CD4-positive, alpha-beta memory T cell (primary cell): ENCODE measurements at regions of chr22 and their contacts with region 1.

Region 1: DNA sequence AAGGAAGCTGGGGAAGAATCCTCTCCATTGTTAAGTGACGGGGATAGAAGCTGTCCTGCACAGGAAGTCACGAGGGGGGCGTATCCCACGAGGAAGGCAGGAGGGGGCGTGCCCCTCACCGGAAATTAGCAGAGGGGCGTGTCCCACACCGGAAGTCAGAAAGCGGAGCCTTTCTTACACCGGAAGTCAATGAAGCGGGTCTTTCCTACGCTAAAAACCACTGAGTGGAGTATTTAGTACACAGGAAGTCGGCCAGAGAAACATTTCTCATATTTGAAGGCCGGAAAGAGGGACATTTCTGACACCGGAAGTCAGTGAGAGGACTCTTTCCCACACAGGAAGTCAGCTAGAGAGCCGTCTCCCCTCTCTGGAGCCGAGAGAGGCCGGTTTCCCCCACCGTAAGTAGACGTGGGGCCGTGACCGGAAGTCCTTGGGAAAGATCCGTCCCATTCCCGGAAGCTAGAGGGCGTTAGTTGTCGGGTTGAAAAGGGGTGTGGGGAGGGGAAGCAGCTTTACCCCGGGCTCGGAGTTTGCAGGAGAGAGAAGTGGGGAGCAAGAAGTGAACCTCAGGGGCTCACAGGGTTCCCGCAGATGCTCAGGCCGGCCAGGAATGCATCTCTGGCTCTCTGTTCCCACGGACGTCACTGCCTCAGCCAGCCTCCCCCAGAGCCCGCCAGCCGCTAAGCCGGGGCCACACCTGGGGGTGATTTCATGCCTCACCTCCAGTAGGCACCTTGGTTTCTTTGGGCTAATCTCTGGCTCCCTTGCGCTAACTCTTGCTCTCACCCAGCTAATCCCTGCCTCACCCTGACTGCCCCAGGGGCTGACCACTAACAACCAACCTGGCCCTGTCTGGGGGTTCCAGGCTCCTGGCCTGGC is 15.4 kb downstream of the MIAT start:
- DNase-seq: peak; percentile 91 to 94 (median 92)
- H3K4me3 ChIP-seq: peak overlapping the region; percentile 79
- H3K4me3 Mint-ChIP-seq: peak overlapping the region; percentile 85 to 99 (median 98)
- H3K27ac ChIP-seq: peak overlapping the region; percentile 94
- H3K27ac Mint-ChIP-seq: peak overlapping the region; percentile 95 to 99 (median 98)
- H3K4me1 ChIP-seq: peaks cover 81% of the 10 kb centered on the region
- H3K4me1 Mint-ChIP-seq: peaks cover 61 to 92% (median 75%) of the 10 kb centered on the region in 4 donors
- H3K27me3 ChIP-seq: no peaks in the 10 kb centered on the region
- H3K27me3 Mint-ChIP-seq: no peaks in the 10 kb centered on the region

Region 2: DNA sequence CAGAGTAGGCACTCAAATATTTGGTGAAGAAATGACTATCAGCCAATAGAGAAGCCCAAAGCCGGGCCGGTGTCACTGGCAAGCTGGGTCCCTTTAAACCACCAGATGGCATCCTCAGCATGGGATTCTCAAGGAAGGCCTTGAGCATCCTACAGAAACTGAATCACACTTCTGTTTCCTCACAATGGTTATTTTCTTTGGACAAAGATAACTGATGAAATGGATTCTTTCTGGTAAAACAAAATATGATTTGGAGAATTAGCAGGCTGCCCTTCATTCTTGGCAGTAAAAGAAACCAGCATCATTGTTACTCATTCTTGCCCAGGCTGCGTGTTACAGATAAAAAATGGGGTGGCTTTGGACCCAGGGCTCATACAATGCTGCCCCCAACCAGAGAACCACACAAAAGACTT is 274.1 kb before region 1 on chr22:
- CTCF ChIA-PET with region 1: no interaction called
- POLR2A ChIA-PET with region 1: no interaction called
- intact Hi-C with region 1: loop called (anchors 2 kb)
- DNase-seq: peak; percentile 36 to 56 (median 46)
- H3K4me3 ChIP-seq: no peak overlapping the region
- H3K4me3 Mint-ChIP-seq: no peak overlapping the region
- H3K27ac ChIP-seq: no peak overlapping the region
- H3K27ac Mint-ChIP-seq: no peak overlapping the region
- H3K4me1 ChIP-seq: no peaks in the 10 kb centered on the region
- H3K4me1 Mint-ChIP-seq: no peaks in the 10 kb centered on the region
- H3K27me3 ChIP-seq: no peaks in the 10 kb centered on the region
- H3K27me3 Mint-ChIP-seq: peaks cover 5 to 6% of the 10 kb centered on the region in 2 donors

Region 3: GRCh38 chr22:26483439-26484359 is 189.1 kb before region 1 on chr22 and contains the starts of genes HPS4 and SRRD:
- CTCF ChIA-PET with region 1: interaction called, 3 read pairs
- POLR2A ChIA-PET with region 1: interaction called, 65 read pairs
- intact Hi-C with region 1: loop called (anchors 1 kb)
- DNase-seq: peak; percentile 91 to 96 (median 94)
- H3K4me3 ChIP-seq: peak within 1 kb of the TSS; percentile 51 to 92
- H3K4me3 Mint-ChIP-seq: peak within 1 kb of the TSS; percentile 91 to 98 (median 92)
- H3K27ac ChIP-seq: peak within 1 kb of the TSS; percentile 95
- H3K27ac Mint-ChIP-seq: peak within 1 kb of the TSS; percentile 93 to 99 (median 99)
- H3K4me1 ChIP-seq: peaks cover 70% of the 10 kb centered on the region
- H3K4me1 Mint-ChIP-seq: peaks cover 50 to 79% (median 66%) of the 10 kb centered on the region in 4 donors
- H3K27me3 ChIP-seq: no peaks in the 10 kb centered on the region
- H3K27me3 Mint-ChIP-seq: no peaks in the 10 kb centered on the region
- total RNA-seq, gene HPS4: 54.0 to 59.7 TPM
- total RNA-seq, gene SRRD: 19.5 to 20.7 TPM

Region 4: DNA sequence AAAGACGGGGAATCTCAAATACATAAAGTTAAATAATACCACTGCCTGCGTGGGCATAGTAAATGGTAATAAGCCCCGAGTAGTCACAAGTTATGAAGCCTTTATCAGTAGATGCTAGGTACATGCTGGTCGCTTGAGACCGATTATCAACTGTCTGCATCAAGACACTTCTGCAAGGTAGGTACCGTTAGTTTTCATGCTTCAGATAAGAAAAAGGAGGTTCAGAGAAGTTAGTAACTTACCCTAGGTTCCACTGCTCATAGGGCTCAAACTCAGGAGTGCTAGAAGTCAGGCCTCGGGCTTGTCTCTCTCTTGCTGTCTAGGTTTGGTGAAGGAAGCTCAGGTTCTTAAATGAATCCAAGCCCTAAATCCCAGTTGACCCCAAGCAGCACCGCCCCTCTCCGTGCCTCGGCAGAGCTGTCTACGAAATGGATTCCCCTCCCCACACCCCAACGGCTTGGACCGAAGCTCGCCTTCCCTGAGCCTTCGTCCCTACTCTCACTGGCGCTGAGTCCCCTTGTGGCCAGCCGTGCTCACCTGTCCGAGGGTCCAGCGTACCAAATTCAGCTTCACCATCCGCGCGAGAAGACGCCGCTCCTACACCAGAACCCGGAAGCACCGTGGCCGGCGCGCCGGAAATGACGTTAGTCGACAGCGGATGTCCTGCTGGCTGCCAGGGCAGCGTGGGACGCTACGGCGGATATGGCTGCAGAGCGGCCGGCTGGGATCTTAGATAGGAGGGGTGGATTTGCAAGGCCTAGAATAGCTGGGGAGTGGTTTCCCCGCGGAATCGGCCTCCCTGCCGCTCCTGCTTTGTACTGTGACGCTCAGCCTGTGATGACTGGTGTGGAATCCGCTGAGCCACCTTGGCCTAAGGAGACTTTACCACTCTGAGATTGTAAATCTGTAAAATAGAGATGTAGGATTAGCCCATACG is 160.7 kb before region 1 on chr22 and contains the start of gene TFIP11:
- CTCF ChIA-PET with region 1: no interaction called
- POLR2A ChIA-PET with region 1: interaction called, 5 read pairs
- intact Hi-C with region 1: loop called (anchors 1 kb)
- DNase-seq: peak; percentile 83 to 90 (median 84)
- H3K4me3 ChIP-seq: peak within 1 kb of the TSS; percentile 83 to 90
- H3K4me3 Mint-ChIP-seq: peak within 1 kb of the TSS; percentile 99 to 100 (median 99)
- H3K27ac ChIP-seq: peak within 1 kb of the TSS; percentile 94
- H3K27ac Mint-ChIP-seq: peak within 1 kb of the TSS; percentile 95 to 100 (median 100)
- H3K4me1 ChIP-seq: peaks cover 21% of the 10 kb centered on the region
- H3K4me1 Mint-ChIP-seq: peaks cover 26 to 46% (median 40%) of the 10 kb centered on the region in 4 donors
- H3K27me3 ChIP-seq: no peaks in the 10 kb centered on the region
- H3K27me3 Mint-ChIP-seq: no peaks in the 10 kb centered on the region
- total RNA-seq, gene TFIP11: 72.7 to 74.5 TPM

Region 5: GRCh38 chr22:26642465-26643417 is 30.1 kb before region 1 on chr22:
- CTCF ChIA-PET with region 1: no interaction called
- POLR2A ChIA-PET with region 1: interaction called, 42 read pairs
- intact Hi-C with region 1: no loop called
- DNase-seq: peak; percentile 45 to 74 (median 51)
- H3K4me3 ChIP-seq: peak overlapping the region; percentile 2 to 17
- H3K4me3 Mint-ChIP-seq: peak overlapping the region; percentile 55 to 79 (median 70)
- H3K27ac ChIP-seq: peak overlapping the region; percentile 61
- H3K27ac Mint-ChIP-seq: peak overlapping the region; percentile 90 to 97 (median 96)
- H3K4me1 ChIP-seq: peaks cover 71% of the 10 kb centered on the region
- H3K4me1 Mint-ChIP-seq: peaks cover 53 to 73% (median 64%) of the 10 kb centered on the region in 4 donors
- H3K27me3 ChIP-seq: no peaks in the 10 kb centered on the region
- H3K27me3 Mint-ChIP-seq: no peaks in the 10 kb centered on the region

Region 6: DNA sequence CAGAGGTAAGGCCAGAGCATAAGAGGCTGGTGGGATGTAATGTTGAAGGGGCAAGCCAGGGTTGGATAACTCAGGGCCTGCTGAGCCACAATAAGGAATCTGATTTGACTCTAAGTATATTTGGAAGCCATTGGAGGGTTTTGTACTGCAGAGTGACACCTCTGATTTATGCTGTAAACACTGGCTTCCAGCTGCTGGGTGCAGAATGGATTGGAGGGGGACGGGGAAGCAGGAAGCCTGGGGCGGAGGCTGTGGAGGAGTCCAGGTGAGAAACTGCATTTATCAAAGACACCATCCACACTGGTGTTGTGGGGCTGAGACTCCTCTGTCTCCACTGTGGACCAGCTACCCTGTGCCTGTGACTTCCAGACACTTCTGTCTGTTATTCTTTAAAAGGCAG is 11.3 kb after region 1 on chr22:
- CTCF ChIA-PET with region 1: no interaction called
- POLR2A ChIA-PET with region 1: interaction called, 27 read pairs
- intact Hi-C with region 1: no loop called
- DNase-seq: no peak
- H3K4me3 ChIP-seq: no peak overlapping the region
- H3K4me3 Mint-ChIP-seq: no peak overlapping the region
- H3K27ac ChIP-seq: no peak overlapping the region
- H3K27ac Mint-ChIP-seq: peak overlapping the region in 5 of 7 donors; percentile 35 to 67 (median 44)
- H3K4me1 ChIP-seq: peaks cover 17% of the 10 kb centered on the region
- H3K4me1 Mint-ChIP-seq: peaks cover 39 to 65% (median 48%) of the 10 kb centered on the region in 4 donors
- H3K27me3 ChIP-seq: no peaks in the 10 kb centered on the region
- H3K27me3 Mint-ChIP-seq: no peaks in the 10 kb centered on the region

Region 7: DNA sequence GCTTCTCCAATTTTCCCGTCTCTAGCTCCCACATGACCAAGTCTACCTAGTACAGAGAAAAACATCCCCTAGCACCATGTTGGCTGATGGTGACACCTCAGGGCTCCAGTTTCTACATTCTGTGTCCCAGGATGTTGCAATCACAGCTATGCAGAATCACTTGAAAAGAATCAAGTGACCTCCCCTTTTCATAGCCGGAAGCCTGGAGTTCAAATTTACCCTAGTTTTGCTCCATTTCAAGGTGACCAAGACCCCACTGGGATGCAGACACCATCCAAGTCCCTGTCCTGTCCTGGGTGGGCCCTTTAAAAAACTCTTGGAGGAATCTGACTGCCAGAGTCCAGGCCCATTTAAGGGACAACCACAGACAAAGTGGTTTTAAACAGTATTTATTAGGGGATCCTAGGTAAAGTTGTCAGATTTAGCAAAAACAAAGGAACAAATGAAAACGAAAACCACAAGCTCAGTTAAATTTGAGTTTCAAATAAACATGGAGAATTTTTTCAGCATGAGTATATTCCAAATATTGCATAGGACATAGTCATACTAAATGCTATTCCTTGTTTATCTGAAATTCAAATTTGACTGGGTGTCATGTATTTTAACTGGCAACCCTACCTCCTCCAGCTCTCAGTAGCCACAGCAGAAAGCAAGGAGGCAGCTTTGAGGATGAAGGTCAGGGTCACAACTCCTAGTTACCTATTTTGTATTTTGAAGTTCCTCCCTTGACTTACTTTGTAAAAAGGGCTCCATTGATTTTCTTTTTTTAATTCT is 37.0 kb after region 1 on chr22:
- CTCF ChIA-PET with region 1: no interaction called
- POLR2A ChIA-PET with region 1: no interaction called
- intact Hi-C with region 1: no loop called
- DNase-seq: no peak
- H3K4me3 ChIP-seq: no peak overlapping the region
- H3K4me3 Mint-ChIP-seq: no peak overlapping the region
- H3K27ac ChIP-seq: no peak overlapping the region
- H3K27ac Mint-ChIP-seq: peak overlapping the region in 3 of 7 donors; percentile 29 to 65 (median 53)
- H3K4me1 ChIP-seq: peaks cover 5% of the 10 kb centered on the region
- H3K4me1 Mint-ChIP-seq: peaks cover 25 to 56% (median 35%) of the 10 kb centered on the region in 4 donors
- H3K27me3 ChIP-seq: no peaks in the 10 kb centered on the region
- H3K27me3 Mint-ChIP-seq: no peaks in the 10 kb centered on the region

Region 8: DNA sequence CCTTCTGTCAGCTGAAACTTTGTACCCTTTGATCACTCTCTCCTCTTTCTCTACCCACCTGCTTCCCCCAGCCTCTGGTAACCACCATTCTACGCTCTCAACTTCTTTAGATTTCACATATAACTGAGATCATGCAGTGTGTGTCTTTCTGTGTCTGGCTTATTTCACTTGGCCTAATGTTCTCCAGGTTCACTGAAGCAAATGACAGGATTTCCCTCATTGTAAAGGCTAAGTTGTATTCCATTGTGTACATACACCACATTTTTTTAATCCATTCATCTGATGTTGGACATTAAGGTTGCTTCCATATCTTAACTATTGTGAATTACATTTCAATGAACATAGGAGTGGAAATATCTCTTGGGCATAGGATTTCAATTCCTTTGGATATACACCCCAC is 192.2 kb after region 1 on chr22:
- CTCF ChIA-PET with region 1: no interaction called
- POLR2A ChIA-PET with region 1: no interaction called
- intact Hi-C with region 1: no loop called
- DNase-seq: no peak
- H3K4me3 ChIP-seq: no peak overlapping the region
- H3K4me3 Mint-ChIP-seq: no peak overlapping the region
- H3K27ac ChIP-seq: no peak overlapping the region
- H3K27ac Mint-ChIP-seq: peak overlapping the region in 1 of 7 donors; percentile 20
- H3K4me1 ChIP-seq: no peaks in the 10 kb centered on the region
- H3K4me1 Mint-ChIP-seq: no peaks in the 10 kb centered on the region
- H3K27me3 ChIP-seq: no peaks in the 10 kb centered on the region
- H3K27me3 Mint-ChIP-seq: no peaks in the 10 kb centered on the region

Region 9: GRCh38 chr22:27154717-27155116 is 481.9 kb after region 1 on chr22:
- CTCF ChIA-PET with region 1: no interaction called
- POLR2A ChIA-PET with region 1: no interaction called
- intact Hi-C with region 1: no loop called
- DNase-seq: no peak
- H3K4me3 ChIP-seq: no peak overlapping the region
- H3K4me3 Mint-ChIP-seq: no peak overlapping the region
- H3K27ac ChIP-seq: no peak overlapping the region
- H3K27ac Mint-ChIP-seq: no peak overlapping the region
- H3K4me1 ChIP-seq: no peaks in the 10 kb centered on the region
- H3K4me1 Mint-ChIP-seq: peaks cover 0 to 4% (median 2%) of the 10 kb centered on the region in 4 donors
- H3K27me3 ChIP-seq: no peaks in the 10 kb centered on the region
- H3K27me3 Mint-ChIP-seq: peaks cover 8 to 23% of the 10 kb centered on the region in 2 donors

Region 10: DNA sequence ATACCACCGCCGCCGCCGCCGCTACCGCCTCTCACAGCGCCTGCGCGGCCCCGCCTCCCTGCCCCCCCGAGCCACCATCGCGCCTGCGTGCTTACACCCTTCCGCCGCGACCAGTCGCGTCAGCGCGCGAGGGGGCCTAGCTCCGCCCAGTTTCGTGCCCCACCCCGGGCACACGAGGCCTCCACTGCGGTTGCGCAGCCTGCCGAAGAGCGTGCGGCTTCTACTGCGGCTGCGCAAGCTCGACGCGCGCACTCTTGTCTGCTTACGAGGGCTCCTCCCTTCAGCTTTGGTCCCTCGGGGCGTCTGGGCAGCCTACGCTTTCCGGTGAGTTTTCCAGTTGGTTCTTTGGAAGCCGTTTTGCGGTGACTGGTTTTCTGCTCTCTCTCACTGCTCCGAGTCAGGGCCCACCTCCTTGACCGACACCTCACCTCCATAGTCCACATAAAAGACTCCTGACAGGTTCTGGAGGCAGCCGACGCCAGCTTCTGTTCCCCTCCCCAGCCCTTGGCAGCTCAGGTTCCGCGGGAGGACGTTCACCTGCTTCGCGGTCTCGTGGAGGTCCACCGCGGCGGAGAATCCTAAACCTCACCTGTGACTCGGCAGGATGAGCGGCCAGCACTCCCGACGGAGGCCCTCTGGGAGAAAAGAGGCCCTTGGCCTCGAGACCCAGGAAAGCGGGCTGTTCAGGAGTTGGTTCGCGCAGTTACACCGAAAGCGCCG is 1246.6 kb after region 1 on chr22 and contains the start of gene PITPNB:
- CTCF ChIA-PET with region 1: no interaction called
- POLR2A ChIA-PET with region 1: interaction called, 8 read pairs
- intact Hi-C with region 1: loop called (anchors 1 kb)
- DNase-seq: peak; percentile 97 to 99 (median 99)
- H3K4me3 ChIP-seq: peak within 1 kb of the TSS; percentile 86 to 94
- H3K4me3 Mint-ChIP-seq: peak within 1 kb of the TSS; percentile 99 to 100 (median 100)
- H3K27ac ChIP-seq: peak within 1 kb of the TSS; percentile 98
- H3K27ac Mint-ChIP-seq: peak within 1 kb of the TSS; percentile 99 to 100 (median 99)
- H3K4me1 ChIP-seq: peaks cover 53% of the 10 kb centered on the region
- H3K4me1 Mint-ChIP-seq: peaks cover 42 to 78% (median 66%) of the 10 kb centered on the region in 4 donors
- H3K27me3 ChIP-seq: no peaks in the 10 kb centered on the region
- H3K27me3 Mint-ChIP-seq: no peaks in the 10 kb centered on the region
- total RNA-seq, gene PITPNB: 72.5 to 76.4 TPM